GM12878 (cell line): ENCODE measurements at regions of chr6 and their contacts with region 1.

Region 1: GRCh38 chr6:62763125-62763912 is 447.9 kb upstream of the FKBP1C start:
- DNase-seq: no peak
- ATAC-seq: no peak
- H3K4me3 ChIP-seq: no peak overlapping the region
- H3K27ac ChIP-seq: no peak overlapping the region
- H3K4me1 ChIP-seq: no peaks in the 10 kb centered on the region
- H3K27me3 ChIP-seq: no peaks in the 10 kb centered on the region
- CTCF ChIP-seq: no peak
- EP300 ChIP-seq: no peak
- POLR2A ChIP-seq: no peak
- RAD21 ChIP-seq: no peak

Region 2: DNA sequence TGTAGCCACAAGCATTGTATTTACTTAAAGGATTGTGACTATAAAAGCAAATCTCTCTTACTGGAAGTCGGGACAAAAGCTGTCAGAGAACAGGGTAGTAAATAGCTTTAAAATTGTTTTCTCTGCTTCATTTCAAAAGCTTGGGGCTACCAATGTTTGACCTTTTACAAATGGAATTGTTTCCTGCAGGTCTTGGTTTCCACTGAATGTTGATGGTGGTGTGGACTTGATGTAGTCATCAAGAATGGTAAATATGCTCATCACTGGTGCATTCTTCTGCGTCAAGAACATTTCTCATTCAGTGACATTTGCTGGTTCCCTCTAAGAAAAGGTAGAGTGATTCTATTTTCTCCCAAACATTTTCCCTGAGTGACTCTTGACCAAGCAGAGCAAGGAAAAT is 41.9 kb before region 1 on chr6:
- CTCF ChIA-PET with region 1: no interaction called
- POLR2A ChIA-PET with region 1: no interaction called
- RAD21 ChIA-PET with region 1: no interaction called
- SMC1A ChIA-PET with region 1: no interaction called
- in situ Hi-C with region 1: no loop called
- intact Hi-C with region 1: no loop called
- DNase-seq: no peak
- ATAC-seq: no peak
- H3K4me3 ChIP-seq: no peak overlapping the region
- H3K27ac ChIP-seq: no peak overlapping the region
- H3K4me1 ChIP-seq: no peaks in the 10 kb centered on the region
- H3K27me3 ChIP-seq: no peaks in the 10 kb centered on the region
- CTCF ChIP-seq: no peak
- EP300 ChIP-seq: no peak
- POLR2A ChIP-seq: no peak
- RAD21 ChIP-seq: no peak

Region 3: GRCh38 chr6:62974452-62974851 is 211.1 kb after region 1 on chr6:
- CTCF ChIA-PET with region 1: no interaction called
- POLR2A ChIA-PET with region 1: no interaction called
- RAD21 ChIA-PET with region 1: no interaction called
- SMC1A ChIA-PET with region 1: interaction called, 3 read pairs
- in situ Hi-C with region 1: no loop called
- intact Hi-C with region 1: loop called (anchors 10 kb)
- DNase-seq: no peak
- ATAC-seq: peak; percentile 81
- H3K4me3 ChIP-seq: no peak overlapping the region
- H3K27ac ChIP-seq: no peak overlapping the region
- H3K4me1 ChIP-seq: no peaks in the 10 kb centered on the region
- H3K27me3 ChIP-seq: no peaks in the 10 kb centered on the region
- CTCF ChIP-seq: no peak
- EP300 ChIP-seq: peak in 1 of 2 experiments; percentile 74; a peak in 1 of 4 replicates
- POLR2A ChIP-seq: no peak
- RAD21 ChIP-seq: no peak